Stomach (tissue), 19 donors: ENCODE measurements at regions of chr3 and their contacts with region 1.

Region 1: DNA sequence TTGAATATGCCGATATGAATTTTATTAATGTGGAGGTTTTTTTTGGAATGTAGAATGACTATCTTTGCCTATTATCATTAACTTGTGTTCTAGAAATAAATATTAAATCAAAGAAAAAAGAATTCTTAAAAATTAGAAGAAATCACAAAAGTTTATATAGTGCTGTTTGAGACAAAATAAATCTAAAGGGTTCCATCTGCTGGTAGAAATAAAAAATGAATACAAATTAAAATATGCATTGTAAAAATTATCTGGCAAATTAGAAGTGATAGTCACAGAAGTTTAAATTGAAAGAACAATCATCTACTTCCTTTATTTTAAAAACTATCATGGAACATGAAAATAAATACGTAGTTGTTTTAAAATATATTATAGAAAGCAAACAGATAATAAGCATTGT is 22.7 kb upstream of the ZBTB20 start:
- DNase-seq: no peak
- H3K4me3 ChIP-seq: no peak overlapping the region
- H3K27ac ChIP-seq: no peak overlapping the region
- H3K4me1 ChIP-seq: no peaks in the 10 kb centered on the region
- H3K27me3 ChIP-seq: no peaks in the 10 kb centered on the region
- CTCF ChIP-seq: peak in 3 of 7 experiments; percentile 5 to 39 (median 25)
- EP300 ChIP-seq: no peak
- POLR2A ChIP-seq: no peak

Region 2: GRCh38 chr3:114152519-114153151 is 1017.2 kb before region 1 on chr3:
- intact Hi-C with region 1: no loop called
- DNase-seq: peak; percentile 75 to 91
- H3K4me3 ChIP-seq: peak overlapping the region; percentile 49 to 62 (median 52)
- H3K27ac ChIP-seq: peak overlapping the region in 2 of 5 donors; percentile 27 to 47
- H3K4me1 ChIP-seq: peaks cover 4 to 11% (median 10%) of the 10 kb centered on the region in 4 donors
- H3K27me3 ChIP-seq: no peaks in the 10 kb centered on the region
- CTCF ChIP-seq: peak in 5 of 7 experiments; percentile 75 to 89 (median 87)
- EP300 ChIP-seq: no peak
- POLR2A ChIP-seq: no peak

Region 3: DNA sequence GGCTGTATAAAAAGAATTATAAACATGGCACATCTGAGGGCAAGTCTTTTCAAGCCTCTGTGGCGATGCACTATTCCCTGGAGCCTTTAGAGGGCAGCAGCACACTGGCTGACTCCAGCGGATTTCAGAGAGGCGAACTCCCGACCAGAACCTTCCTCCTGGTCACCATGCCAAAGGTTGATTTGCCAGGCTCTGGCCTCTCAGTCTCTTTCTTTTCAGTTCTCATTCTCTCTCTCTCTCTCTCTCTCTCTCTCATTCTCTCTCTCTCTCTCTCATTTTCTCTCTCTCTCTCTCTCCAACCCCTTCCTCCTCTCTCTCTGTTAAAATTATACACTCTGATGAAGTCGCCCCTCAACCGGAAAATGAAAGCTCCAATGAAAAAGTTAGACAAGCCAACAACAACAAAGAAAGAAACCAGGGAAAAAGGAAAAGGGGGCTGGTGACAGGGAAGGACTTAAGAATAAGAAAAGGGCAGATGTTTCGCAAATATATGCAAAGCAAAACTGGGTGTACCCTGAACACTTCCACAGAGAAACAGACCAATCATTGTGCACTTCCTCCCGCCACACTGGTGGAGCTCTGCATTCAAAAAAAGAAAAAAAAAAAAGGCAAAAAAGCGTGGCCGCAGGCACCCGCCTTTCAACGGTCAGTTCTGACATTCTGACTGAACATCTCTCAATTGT is 785.8 kb before region 1 on chr3:
- intact Hi-C with region 1: loop called (anchors 10 kb)
- DNase-seq: peak; percentile 78 to 92
- H3K4me3 ChIP-seq: peak overlapping the region; percentile 35 to 53 (median 38)
- H3K27ac ChIP-seq: peak overlapping the region; percentile 21 to 84 (median 80)
- H3K4me1 ChIP-seq: peaks cover 6 to 31% (median 19%) of the 10 kb centered on the region in 4 donors
- H3K27me3 ChIP-seq: no peaks in the 10 kb centered on the region
- CTCF ChIP-seq: peak in 5 of 7 experiments; percentile 72 to 97 (median 93)
- EP300 ChIP-seq: no peak
- POLR2A ChIP-seq: no peak